Mammary epithelial cell (primary cell): ENCODE measurements at regions of chr9 and their contacts with region 1.

Region 1: GRCh38 chr9:130962418-130963316 is 23.6 kb upstream of the FIBCD1 start:
- DNase-seq: peak; percentile 91
- H3K4me3 ChIP-seq: no peak overlapping the region
- H3K27ac ChIP-seq: no peak overlapping the region
- H3K4me1 ChIP-seq: peaks cover 16% of the 10 kb centered on the region
- H3K27me3 ChIP-seq: no peaks in the 10 kb centered on the region
- CTCF ChIP-seq: peak in 1 of 2 donors; percentile 6

Region 2: DNA sequence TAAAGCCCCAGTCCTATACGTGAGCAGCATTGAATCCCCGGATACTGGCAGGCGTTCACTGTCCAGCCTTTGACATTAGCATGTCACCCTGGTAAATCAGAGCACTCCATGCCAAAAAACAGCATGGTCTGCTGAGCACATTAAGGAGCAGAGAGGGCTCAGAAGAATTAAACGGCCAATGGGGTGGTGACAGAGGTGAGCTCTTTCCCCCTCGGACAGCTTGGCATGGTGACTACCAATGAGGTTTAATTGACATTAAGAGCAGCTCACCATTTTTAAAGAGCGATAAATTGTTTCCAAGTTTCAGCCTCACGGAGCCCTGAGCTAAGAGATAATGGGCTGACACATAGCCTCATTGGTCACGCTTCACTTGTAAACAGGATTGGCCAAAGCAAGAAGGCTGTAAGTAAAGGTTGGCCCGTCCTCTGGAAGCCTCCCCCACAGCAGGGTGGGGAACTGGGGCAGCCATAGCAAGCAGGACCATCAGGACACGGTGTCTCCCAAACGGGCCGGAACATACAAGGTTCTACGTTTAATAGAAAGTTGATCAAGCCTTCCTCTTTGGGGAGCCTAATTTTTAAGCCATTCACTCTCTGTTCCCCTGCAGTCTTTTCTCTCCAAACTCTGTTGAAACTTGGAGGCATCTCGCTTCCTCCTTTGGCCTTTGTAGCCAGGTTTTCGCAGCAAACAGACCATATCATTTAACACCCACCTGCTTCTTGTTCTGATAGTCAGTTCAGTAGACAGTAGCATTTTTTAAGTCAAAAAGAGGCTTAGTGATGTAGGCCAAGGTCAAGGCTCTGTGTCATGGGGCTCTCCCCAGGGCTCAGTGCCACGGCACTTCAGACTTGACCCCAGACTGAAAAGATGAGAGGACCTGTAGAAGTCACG is 91.9 kb before region 1 on chr9:
- CTCF ChIA-PET with region 1: no interaction called
- dilution Hi-C with region 1: no loop called
- in situ Hi-C with region 1: no loop called
- intact Hi-C with region 1: no loop called
- DNase-seq: no peak
- H3K4me3 ChIP-seq: no peak overlapping the region
- H3K27ac ChIP-seq: no peak overlapping the region
- H3K4me1 ChIP-seq: no peaks in the 10 kb centered on the region
- H3K27me3 ChIP-seq: no peaks in the 10 kb centered on the region
- CTCF ChIP-seq: no peak

Region 3: GRCh38 chr9:130946778-130947617 is 15.7 kb before region 1 on chr9:
- CTCF ChIA-PET with region 1: no interaction called
- dilution Hi-C with region 1: no loop called
- in situ Hi-C with region 1: no loop called
- intact Hi-C with region 1: loop called (anchors 2 kb)
- DNase-seq: peak; percentile 82
- H3K4me3 ChIP-seq: no peak overlapping the region
- H3K27ac ChIP-seq: peak overlapping the region; percentile 52
- H3K4me1 ChIP-seq: peaks cover 27% of the 10 kb centered on the region
- H3K27me3 ChIP-seq: no peaks in the 10 kb centered on the region
- CTCF ChIP-seq: no peak

Region 4: DNA sequence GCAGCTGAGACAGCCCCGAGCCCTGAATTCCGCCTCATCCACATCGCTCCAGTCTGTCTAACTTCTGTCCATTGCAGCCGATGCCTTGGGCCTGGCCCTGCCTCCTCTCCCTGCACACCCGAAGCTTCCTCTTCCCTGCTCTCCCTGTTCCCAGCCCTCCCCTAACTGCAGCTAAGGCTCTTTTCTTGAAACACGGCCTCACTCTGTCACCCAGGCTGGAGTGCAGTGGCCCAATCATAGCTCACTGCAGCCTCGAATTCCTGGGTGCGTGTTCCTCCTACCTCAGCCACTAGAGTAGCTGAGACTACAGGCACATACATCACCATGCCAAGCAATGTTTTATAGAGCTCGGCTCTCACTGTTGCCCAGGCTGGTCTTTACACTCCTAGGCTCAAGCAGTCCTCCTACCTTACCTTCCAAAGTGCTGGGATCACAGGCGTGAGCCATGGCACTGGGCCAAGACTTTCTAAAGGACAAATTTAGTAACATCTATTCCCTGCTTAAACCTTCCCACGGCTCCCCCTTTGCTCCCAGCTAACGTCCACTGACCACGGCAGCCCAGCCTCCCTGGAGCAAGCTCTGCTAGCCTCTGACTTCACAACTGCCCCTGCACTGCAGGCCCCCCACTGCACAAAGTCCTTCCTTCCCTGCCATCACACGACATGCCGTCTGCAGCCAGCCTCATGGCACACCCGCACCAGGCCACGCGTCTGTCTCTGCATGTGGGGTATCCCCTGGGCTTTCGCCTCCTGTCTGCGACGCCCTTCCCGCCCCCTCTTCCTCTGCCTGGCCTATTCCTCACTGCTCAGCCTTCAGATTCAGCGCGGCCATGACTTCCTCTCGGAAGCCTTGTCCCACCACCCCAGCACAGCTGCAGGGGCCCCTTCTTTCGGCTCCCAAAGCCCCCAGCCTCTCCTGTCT is 74.9 kb after region 1 on chr9:
- CTCF ChIA-PET with region 1: no interaction called
- dilution Hi-C with region 1: loop called (anchors 5 kb)
- in situ Hi-C with region 1: no loop called
- intact Hi-C with region 1: no loop called
- DNase-seq: no peak
- H3K4me3 ChIP-seq: no peak overlapping the region
- H3K27ac ChIP-seq: no peak overlapping the region
- H3K4me1 ChIP-seq: no peaks in the 10 kb centered on the region
- H3K27me3 ChIP-seq: no peaks in the 10 kb centered on the region
- CTCF ChIP-seq: no peak